Activated CD4-positive, alpha-beta memory T cell treated with anti-CD3 and anti-CD28 coated beads, Interleukin-2, amount 10 ng/mL, durations not matched to agents 7 days and 5 days (primary cell): ENCODE measurements at regions of chr10 and their contacts with region 1.

Region 1: DNA sequence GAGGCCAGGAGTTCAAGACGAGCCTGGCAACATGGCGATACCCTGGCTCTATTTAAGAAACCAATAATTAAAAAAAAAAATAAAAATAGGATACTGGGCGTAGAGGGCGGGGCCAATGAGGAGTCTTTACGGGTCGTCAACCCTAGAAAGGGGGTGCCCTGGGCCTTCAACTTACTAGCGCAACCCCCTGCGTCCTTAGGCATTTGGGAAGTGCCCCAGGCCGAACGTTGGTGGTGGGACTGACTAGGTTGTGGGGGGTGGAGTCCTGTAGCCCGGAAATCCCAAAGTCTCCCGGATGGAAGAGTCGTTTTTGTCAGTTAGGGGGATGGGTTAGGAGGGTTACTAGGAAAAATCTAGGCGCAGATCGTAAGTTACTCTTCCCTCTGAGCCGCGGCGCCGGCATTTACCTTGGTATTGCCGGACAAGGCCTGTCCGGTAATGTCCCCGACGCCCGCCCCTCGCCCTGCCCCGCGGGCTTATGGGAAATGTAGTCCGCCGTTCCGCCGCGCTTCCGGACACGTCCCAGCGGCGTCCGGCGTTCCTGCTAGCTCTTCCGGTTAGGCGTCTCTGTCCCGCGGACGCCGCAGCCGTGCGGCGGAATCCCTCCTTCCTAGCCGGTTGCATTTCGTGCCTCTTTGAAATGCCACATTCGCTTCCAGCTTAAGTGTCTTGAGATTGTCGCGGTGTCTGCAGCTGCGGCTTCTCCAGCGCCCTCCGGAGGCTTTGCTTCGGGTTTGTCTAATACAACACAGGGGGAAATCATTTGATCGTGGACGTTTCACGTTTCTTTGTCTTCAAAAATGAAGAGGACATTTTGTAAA is 1.3 kb upstream of the ACBD5 start:
- DNase-seq: peak; percentile 90
- H3K4me3 Mint-ChIP-seq: peak overlapping the region; percentile 89
- H3K27ac Mint-ChIP-seq: peak overlapping the region; percentile 98
- H3K4me1 Mint-ChIP-seq: peaks cover 34% of the 10 kb centered on the region
- H3K27me3 Mint-ChIP-seq: no peaks in the 10 kb centered on the region

Region 2: GRCh38 chr10:26860443-26861204 is 381.2 kb before region 1 on chr10 and contains the start of gene ABI1:
- CTCF ChIA-PET with region 1: no interaction called
- POLR2A ChIA-PET with region 1: interaction called, 10 read pairs
- DNase-seq: peak; percentile 98
- H3K4me3 Mint-ChIP-seq: peak within 1 kb of the TSS; percentile 100
- H3K27ac Mint-ChIP-seq: peak within 1 kb of the TSS; percentile 100
- H3K4me1 Mint-ChIP-seq: peaks cover 30% of the 10 kb centered on the region
- H3K27me3 Mint-ChIP-seq: peaks cover 11% of the 10 kb centered on the region
- total RNA-seq, gene ABI1: 76.9 to 78.4 TPM

Region 3: DNA sequence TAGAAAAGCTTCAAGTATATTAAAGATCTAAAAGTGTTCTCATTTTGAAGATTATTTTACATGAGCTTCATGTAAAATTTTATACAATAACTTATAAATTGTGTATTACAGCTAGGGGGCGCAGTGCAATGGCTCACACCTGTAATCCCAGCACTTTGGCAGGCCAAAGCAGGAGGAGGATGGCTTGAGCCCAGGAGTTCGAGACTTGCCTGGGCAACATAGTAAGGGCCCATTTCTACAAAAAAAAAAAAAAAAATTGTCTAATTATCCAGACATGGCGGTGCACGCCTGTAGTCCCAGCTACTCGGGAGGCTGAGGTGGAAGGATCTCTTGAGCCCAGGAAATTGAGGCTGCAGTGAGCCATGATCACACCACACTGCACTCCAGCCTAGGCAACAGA is 17.9 kb before region 1 on chr10:
- CTCF ChIA-PET with region 1: interaction called, 16 read pairs
- POLR2A ChIA-PET with region 1: interaction called, 11 read pairs
- DNase-seq: peak; percentile 42
- H3K4me3 Mint-ChIP-seq: no peak overlapping the region
- H3K27ac Mint-ChIP-seq: peak overlapping the region; percentile 47
- H3K4me1 Mint-ChIP-seq: peaks cover 24% of the 10 kb centered on the region
- H3K27me3 Mint-ChIP-seq: no peaks in the 10 kb centered on the region

Region 4: DNA sequence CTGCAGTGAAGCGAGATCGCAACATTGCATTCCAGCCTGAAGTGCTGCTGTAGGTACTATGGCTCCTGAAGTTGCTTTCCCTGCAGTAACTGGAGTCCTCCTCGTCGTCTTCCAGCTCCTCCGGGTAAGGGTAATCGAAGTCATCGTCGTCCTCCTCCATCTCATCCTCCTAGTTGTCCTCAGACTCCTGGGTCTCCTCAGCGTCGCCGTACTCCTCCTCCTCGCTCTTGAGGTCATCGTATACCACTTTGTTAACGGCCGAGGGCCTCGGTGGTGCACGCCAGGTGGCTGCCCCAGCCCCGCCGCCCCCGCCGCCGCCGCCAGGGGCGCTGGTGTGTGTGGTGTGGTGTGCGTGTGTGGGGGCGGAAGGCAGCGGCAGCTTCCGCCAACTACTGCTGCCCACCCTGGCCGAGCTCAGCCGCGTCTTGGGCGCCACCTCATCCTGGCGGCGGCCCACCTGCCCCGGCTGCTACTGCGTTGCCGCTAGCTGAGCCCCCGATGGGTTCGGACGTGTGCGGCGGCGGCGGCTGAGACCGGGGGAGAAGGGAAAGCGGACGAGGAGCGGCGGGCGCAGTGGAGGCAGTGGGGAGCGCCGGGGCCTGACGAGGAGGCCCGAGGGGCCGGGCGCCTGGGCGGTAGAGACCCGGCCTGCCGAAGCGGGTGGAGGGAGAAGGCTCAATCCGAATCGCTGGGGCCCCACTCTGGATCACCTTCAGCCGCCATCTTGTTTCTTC is 10.6 kb after region 1 on chr10:
- CTCF ChIA-PET with region 1: interaction called, 26 read pairs
- POLR2A ChIA-PET with region 1: interaction called, 48 read pairs
- DNase-seq: peak; percentile 83
- H3K4me3 Mint-ChIP-seq: peak overlapping the region; percentile 78
- H3K27ac Mint-ChIP-seq: peak overlapping the region; percentile 67
- H3K4me1 Mint-ChIP-seq: peaks cover 15% of the 10 kb centered on the region
- H3K27me3 Mint-ChIP-seq: peaks cover 8% of the 10 kb centered on the region

Region 5: DNA sequence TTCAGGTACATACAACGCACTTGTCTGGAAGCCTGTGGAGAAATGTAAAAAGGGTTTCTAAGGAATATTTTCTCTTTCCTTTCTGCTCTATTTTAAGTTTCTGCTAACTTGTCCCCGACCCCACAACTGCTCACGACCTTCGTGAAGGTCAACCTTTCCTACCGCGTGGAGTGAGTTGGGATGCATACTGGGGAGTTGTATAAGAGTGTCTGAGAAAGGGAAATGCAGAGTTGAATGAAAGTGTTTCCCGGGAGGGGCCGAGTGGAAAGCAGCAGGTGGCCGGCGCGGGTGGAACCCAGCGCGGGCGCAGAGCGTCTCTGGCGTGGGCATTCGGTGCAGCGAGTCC is 16.6 kb after region 1 on chr10:
- CTCF ChIA-PET with region 1: interaction called, 26 read pairs
- POLR2A ChIA-PET with region 1: interaction called, 48 read pairs
- DNase-seq: no peak
- H3K4me3 Mint-ChIP-seq: peak overlapping the region; percentile 68
- H3K27ac Mint-ChIP-seq: no peak overlapping the region
- H3K4me1 Mint-ChIP-seq: peaks cover 27% of the 10 kb centered on the region
- H3K27me3 Mint-ChIP-seq: peaks cover 49% of the 10 kb centered on the region

Region 6: GRCh38 chr10:27312854-27313253 is 71.0 kb after region 1 on chr10:
- CTCF ChIA-PET with region 1: no interaction called
- POLR2A ChIA-PET with region 1: no interaction called
- DNase-seq: no peak
- H3K4me3 Mint-ChIP-seq: no peak overlapping the region
- H3K27ac Mint-ChIP-seq: no peak overlapping the region
- H3K4me1 Mint-ChIP-seq: peaks cover 8% of the 10 kb centered on the region
- H3K27me3 Mint-ChIP-seq: peaks cover 5% of the 10 kb centered on the region

Region 7: GRCh38 chr10:27360581-27361172 is 118.8 kb after region 1 on chr10:
- CTCF ChIA-PET with region 1: no interaction called
- POLR2A ChIA-PET with region 1: no interaction called
- DNase-seq: peak; percentile 85
- H3K4me3 Mint-ChIP-seq: no peak overlapping the region
- H3K27ac Mint-ChIP-seq: no peak overlapping the region
- H3K4me1 Mint-ChIP-seq: peaks cover 3% of the 10 kb centered on the region
- H3K27me3 Mint-ChIP-seq: peaks cover 4% of the 10 kb centered on the region

Region 8: DNA sequence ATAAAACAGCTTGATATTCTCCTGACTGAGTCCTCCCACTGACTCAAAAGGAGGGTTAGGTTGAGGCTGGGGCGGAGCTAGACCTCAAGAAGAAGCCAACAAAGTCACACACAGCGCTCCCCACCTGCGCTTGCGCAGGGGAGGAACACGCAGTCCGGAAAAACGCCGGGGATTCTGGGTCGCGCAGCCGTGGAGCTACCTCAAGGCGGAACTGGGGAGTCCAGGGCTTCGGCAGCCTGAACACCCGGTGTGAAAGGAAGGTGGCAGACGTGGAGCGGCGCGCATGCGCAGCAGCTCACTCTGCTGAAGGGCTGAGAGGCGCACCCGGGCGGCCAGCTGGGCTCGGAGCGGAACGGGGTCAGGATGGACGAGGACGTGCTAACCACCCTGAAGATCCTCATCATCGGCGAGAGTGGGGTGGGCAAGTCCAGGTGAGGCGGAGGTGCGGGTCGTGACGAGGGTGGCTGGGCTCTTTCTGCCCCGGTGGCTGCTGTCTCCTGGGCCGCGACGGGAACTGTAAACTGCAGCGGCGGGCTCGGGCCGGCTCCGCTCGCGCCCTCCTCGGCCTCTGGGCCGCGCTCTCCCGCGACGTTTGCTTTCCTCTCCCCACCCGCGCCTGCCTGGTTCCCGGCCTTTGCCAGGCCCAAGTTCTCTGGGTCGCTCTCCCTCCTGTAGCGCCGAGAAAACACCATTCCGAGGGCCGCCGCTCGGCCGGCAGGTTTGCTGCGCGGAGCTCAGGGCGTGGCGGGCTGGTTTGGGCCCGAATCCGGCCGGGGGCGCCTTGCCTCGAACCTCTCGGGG is 262.3 kb after region 1 on chr10 and contains the start of gene RAB18:
- CTCF ChIA-PET with region 1: interaction called, 4 read pairs
- POLR2A ChIA-PET with region 1: interaction called, 25 read pairs
- DNase-seq: peak; percentile 98
- H3K4me3 Mint-ChIP-seq: peak within 1 kb of the TSS; percentile 98
- H3K27ac Mint-ChIP-seq: peak within 1 kb of the TSS; percentile 94
- H3K4me1 Mint-ChIP-seq: peaks cover 46% of the 10 kb centered on the region
- H3K27me3 Mint-ChIP-seq: no peaks in the 10 kb centered on the region
- total RNA-seq, gene RAB18: 69.5 to 72.0 TPM